ENCODE measurements at regions of chrX and their contacts with region 1.

Region 1: DNA sequence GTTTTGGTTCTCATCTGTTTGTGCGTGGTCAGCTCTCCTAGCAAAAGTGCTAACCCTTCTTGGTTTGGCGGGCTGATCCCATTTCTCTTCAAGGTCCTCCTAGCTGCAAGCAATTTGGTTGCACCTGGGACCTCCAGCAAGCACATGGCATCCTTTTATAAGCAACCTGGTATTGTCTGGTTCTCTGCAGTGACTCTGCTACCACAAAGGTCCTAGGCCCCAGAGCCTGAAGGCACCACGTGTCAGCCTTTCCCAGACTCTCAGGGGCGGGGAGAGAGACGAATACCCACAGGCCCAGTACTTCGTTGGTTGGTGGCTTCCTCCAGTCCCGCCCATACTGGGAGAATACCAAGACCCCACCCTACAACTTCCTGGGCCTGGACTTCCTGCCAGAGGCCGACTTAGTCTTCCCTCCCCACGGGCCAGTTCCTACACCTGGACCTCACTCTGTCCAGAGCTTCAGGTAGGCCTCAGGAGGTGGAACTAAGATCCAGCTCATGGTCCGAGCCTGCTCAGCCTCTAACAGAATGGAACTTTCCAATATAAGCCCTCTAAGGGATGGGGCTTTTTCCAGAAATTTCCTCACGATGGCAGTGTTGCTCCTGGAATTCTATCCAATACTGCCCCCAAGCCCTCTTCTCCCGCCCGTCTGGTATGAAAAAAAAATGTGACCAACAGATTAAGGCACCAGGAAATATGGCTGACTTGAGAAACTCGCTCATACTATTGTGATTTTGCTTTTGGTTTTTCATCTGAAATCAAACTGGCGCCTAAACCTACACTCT is 192.5 kb upstream of the STK26 start:
- DNase-seq: peak; percentile 48 to 76 (median 65)
- H3K4me3 ChIP-seq: peak overlapping the region in 1 of 2 donors; percentile 5
- H3K4me3 Mint-ChIP-seq: peak overlapping the region in 7 of 8 donors; percentile 1 to 79 (median 54)
- H3K27ac ChIP-seq: no peak overlapping the region
- H3K27ac Mint-ChIP-seq: peak overlapping the region; percentile 20 to 88 (median 42)
- H3K4me1 ChIP-seq: peaks cover 29% of the 10 kb centered on the region
- H3K4me1 Mint-ChIP-seq: peaks cover 8 to 35% (median 17%) of the 10 kb centered on the region in 4 donors
- H3K27me3 ChIP-seq: no peaks in the 10 kb centered on the region
- H3K27me3 Mint-ChIP-seq: no peaks in the 10 kb centered on the region

Region 2: GRCh38 chrX:131812836-131813825 is 17.5 kb before region 1 on chrX:
- CTCF ChIA-PET with region 1: interaction called, 6 read pairs
- POLR2A ChIA-PET with region 1: interaction called, 10 read pairs
- intact Hi-C with region 1: loop called (anchors 1 kb)
- DNase-seq: peak; percentile 85 to 96 (median 93)
- H3K4me3 ChIP-seq: peak overlapping the region in 1 of 2 donors; percentile 49
- H3K4me3 Mint-ChIP-seq: peak overlapping the region; percentile 88 to 97 (median 92)
- H3K27ac ChIP-seq: peak overlapping the region; percentile 63
- H3K27ac Mint-ChIP-seq: peak overlapping the region; percentile 77 to 98 (median 94)
- H3K4me1 ChIP-seq: peaks cover 20% of the 10 kb centered on the region
- H3K4me1 Mint-ChIP-seq: peaks cover 5 to 32% (median 17%) of the 10 kb centered on the region in 4 donors
- H3K27me3 ChIP-seq: no peaks in the 10 kb centered on the region
- H3K27me3 Mint-ChIP-seq: no peaks in the 10 kb centered on the region

Region 3: DNA sequence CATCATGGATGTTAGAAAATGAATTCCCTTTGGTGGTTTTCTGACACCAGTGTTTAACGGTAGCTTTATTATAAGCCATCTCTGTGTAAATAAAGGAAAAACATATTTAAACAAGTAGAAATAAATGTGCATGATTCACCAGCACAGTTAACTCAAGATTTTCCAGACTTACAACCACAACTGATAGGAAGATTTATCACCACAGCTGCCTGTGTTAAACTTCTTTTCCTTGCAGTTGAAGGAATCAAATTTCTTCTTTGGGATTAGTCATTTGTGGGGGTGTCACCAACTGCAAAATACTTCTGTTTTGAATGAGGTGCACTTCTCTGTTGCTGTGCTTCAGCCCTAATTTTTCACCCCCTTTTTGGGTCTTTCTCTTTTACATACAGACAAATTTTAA is 64.4 kb after region 1 on chrX:
- CTCF ChIA-PET with region 1: no interaction called
- POLR2A ChIA-PET with region 1: no interaction called
- intact Hi-C with region 1: no loop called
- DNase-seq: no peak
- H3K4me3 ChIP-seq: no peak overlapping the region
- H3K4me3 Mint-ChIP-seq: no peak overlapping the region
- H3K27ac ChIP-seq: no peak overlapping the region
- H3K27ac Mint-ChIP-seq: no peak overlapping the region
- H3K4me1 ChIP-seq: no peaks in the 10 kb centered on the region
- H3K4me1 Mint-ChIP-seq: no peaks in the 10 kb centered on the region
- H3K27me3 ChIP-seq: no peaks in the 10 kb centered on the region
- H3K27me3 Mint-ChIP-seq: no peaks in the 10 kb centered on the region

Measured in CD4-positive, alpha-beta memory T cell (primary cell).